ENCODE measurements at regions of chr6 and their contacts with region 1.

Region 1: GRCh38 chr6:109009236-109009961 is 85.2 kb downstream of the SESN1 start:
- DNase-seq: peak; percentile 84 to 97 (median 91)
- ATAC-seq: peak; percentile 96 to 99 (median 97)
- H3K4me3 ChIP-seq: peak overlapping the region; percentile 97
- H3K4me3 Mint-ChIP-seq: peak overlapping the region; percentile 83 to 98 (median 97)
- H3K27ac ChIP-seq: peak overlapping the region; percentile 96
- H3K27ac Mint-ChIP-seq: peak overlapping the region; percentile 98 to 99
- H3K4me1 ChIP-seq: peaks cover 17 to 39% of the 10 kb centered on the region in 2 experiments
- H3K4me1 Mint-ChIP-seq: peaks cover 67 to 80% (median 68%) of the 10 kb centered on the region in 3 donors
- H3K27me3 ChIP-seq: no peaks in the 10 kb centered on the region
- H3K27me3 Mint-ChIP-seq: no peaks in the 10 kb centered on the region

Region 2: GRCh38 chr6:108097882-108098281 is 911.5 kb before region 1 on chr6:
- CTCF ChIA-PET with region 1: no interaction called
- POLR2A ChIA-PET with region 1: no interaction called
- DNase-seq: no peak
- ATAC-seq: no peak
- H3K4me3 ChIP-seq: no peak overlapping the region
- H3K4me3 Mint-ChIP-seq: no peak overlapping the region
- H3K27ac ChIP-seq: no peak overlapping the region
- H3K27ac Mint-ChIP-seq: no peak overlapping the region
- H3K4me1 ChIP-seq: no peaks in the 10 kb centered on the region
- H3K4me1 Mint-ChIP-seq: no peaks in the 10 kb centered on the region
- H3K27me3 ChIP-seq: peaks cover 0 to 8% of the 10 kb centered on the region in 2 experiments
- H3K27me3 Mint-ChIP-seq: peaks cover 28 to 31% of the 10 kb centered on the region in 2 donors

Region 3: GRCh38 chr6:109095027-109095834 is 85.8 kb after region 1 on chr6 and contains the start of gene CEP57L1:
- CTCF ChIA-PET with region 1: interaction called in 1 of 2 experiments, 4 read pairs
- POLR2A ChIA-PET with region 1: interaction called in 1 of 2 experiments, 10 read pairs
- DNase-seq: peak; percentile 84 to 97 (median 94)
- ATAC-seq: peak; percentile 76 to 83 (median 80)
- H3K4me3 ChIP-seq: peak within 1 kb of the TSS; percentile 83 to 93
- H3K4me3 Mint-ChIP-seq: peak within 1 kb of the TSS; percentile 89 to 93 (median 90)
- H3K27ac ChIP-seq: peak within 1 kb of the TSS; percentile 98
- H3K27ac Mint-ChIP-seq: peak within 1 kb of the TSS; percentile 99
- H3K4me1 ChIP-seq: peaks cover 8 to 28% of the 10 kb centered on the region in 2 experiments
- H3K4me1 Mint-ChIP-seq: peaks cover 49 to 59% (median 55%) of the 10 kb centered on the region in 3 donors
- H3K27me3 ChIP-seq: no peaks in the 10 kb centered on the region
- H3K27me3 Mint-ChIP-seq: no peaks in the 10 kb centered on the region
- total RNA-seq, gene CEP57L1: 5.2 to 7.9 (median 5.9) TPM

Measured in T-cell (primary cell).